H1 (cell line): ENCODE measurements at regions of chr12 and their contacts with region 1.

Region 1: GRCh38 chr12:71780237-71780822 is 25.7 kb downstream of the RAB21 start:
- DNase-seq: no peak
- H3K4me3 ChIP-seq: no peak overlapping the region
- H3K27ac ChIP-seq: no peak overlapping the region
- H3K4me1 ChIP-seq: no peaks in the 10 kb centered on the region
- H3K27me3 ChIP-seq: no peaks in the 10 kb centered on the region
- CTCF ChIP-seq: peak in 2 of 3 experiments; percentile 58 to 65; a peak in 3 of 4 replicates
- EP300 ChIP-seq: no peak
- POLR2A ChIP-seq: no peak
- RAD21 ChIP-seq: peak; percentile 61 to 70

Region 2: DNA sequence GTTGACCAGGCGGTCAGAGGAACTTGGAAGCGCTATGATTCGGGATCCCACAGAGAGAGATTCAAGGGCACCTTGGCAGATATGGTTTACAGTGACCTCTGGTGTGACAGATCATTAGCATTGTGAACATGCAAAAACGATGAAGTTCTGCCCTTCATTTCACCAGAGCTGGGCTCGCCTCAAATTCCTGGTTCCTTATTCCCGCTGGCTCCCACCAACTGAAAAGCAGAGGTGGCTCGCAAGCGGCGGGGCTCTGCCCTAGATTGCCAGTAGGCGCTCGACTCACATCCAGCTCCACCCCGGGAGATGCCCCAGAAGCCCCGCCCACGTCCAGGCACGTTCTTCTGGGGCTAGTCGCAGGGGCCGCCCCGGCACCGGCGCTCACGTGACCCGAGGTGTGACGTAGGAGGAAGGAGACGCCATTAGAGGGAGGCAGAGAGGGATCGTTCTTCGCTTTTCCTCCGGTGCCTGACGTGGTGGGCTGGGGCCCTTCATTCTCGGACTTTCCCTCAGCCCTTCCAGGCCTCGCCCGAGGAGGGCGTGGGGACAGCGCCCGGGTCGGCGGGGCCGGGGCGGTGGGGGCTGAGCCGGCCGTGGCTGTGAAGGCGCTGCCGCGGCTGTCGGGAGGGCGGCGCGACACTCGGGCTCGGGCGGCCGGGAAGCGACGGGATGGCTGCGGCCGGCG is 25.7 kb before region 1 on chr12 and contains the start of gene RAB21:
- CTCF ChIA-PET with region 1: interaction called, 15 read pairs
- POLR2A ChIA-PET with region 1: interaction called, 4 read pairs
- DNase-seq: peak; percentile 93 to 98
- H3K4me3 ChIP-seq: peak within 1 kb of the TSS; percentile 85 to 99 (median 92)
- H3K27ac ChIP-seq: peak within 1 kb of the TSS; percentile 94
- H3K4me1 ChIP-seq: peaks cover 0 to 12% (median 2%) of the 10 kb centered on the region in 4 experiments; a peak in 4 of 7 replicates
- H3K27me3 ChIP-seq: no peaks in the 10 kb centered on the region
- CTCF ChIP-seq: no peak
- EP300 ChIP-seq: peak in 1 of 2 experiments; percentile 46; a peak in 1 of 3 replicates
- POLR2A ChIP-seq: peak; percentile 91 to 96
- RAD21 ChIP-seq: no peak
- total RNA-seq, gene RAB21: 44.1 and 47.2 TPM in 2 replicates

Region 3: DNA sequence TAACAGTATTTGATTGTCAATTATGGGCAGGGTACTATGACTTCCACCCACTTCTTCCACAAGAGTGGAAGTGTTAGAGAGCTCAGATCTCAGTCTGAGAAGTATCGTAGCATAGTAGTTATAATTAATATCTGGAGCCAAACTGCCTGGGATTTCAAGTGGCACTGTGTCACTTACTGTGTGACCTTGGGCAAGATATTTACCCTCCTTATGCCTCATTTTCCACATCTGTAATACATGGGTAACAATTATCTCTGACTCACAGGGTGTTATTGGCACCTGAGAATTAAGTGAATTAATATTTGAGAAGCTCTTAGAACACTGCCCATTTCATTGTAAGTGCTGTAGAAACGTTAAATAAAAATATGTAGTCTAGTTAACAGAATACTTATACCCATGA is 14.1 kb before region 1 on chr12:
- CTCF ChIA-PET with region 1: interaction called, 10 read pairs
- POLR2A ChIA-PET with region 1: interaction called, 3 read pairs
- DNase-seq: no peak
- H3K4me3 ChIP-seq: no peak overlapping the region
- H3K27ac ChIP-seq: no peak overlapping the region
- H3K4me1 ChIP-seq: no peaks in the 10 kb centered on the region
- H3K27me3 ChIP-seq: no peaks in the 10 kb centered on the region
- CTCF ChIP-seq: no peak
- EP300 ChIP-seq: no peak
- POLR2A ChIP-seq: no peak
- RAD21 ChIP-seq: no peak

Region 4: DNA sequence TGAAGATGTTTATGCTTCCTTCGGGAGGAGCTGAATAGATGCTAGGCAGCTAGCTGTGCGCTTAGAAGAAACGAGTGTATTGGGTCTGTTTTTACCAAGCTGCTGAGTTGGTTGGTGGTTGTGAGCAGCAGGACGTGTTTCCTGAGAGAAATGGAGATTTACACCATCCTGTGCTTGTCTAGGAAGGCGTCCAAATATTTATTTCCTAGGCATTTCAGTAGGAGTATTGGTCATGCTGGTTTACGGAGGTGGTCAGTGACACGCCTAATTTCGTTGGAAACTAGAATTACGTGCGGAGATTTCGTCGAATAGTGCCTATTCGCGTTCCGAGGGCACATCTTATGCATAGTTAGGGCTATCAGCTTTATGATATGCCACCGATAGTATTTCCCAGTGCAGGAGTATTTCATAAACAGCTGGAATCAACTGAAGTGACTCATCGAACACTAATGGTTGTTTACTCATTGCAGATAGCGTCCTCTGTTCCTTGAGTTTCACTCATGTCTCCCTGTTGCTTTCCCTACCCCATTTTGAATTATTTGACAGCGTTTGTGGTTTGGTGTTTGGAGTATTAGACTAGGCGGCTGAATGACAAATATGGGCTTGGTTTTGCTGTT is 60.0 kb after region 1 on chr12:
- CTCF ChIA-PET with region 1: interaction called, 14 read pairs
- POLR2A ChIA-PET with region 1: no interaction called
- DNase-seq: no peak
- H3K4me3 ChIP-seq: peak overlapping the region; percentile 85 to 91 (median 88)
- H3K27ac ChIP-seq: peak overlapping the region; percentile 93
- H3K4me1 ChIP-seq: peaks cover 0 to 4% (median 1%) of the 10 kb centered on the region in 4 experiments; a peak in 2 of 7 replicates
- H3K27me3 ChIP-seq: peaks cover 0 to 4% (median under 1%) of the 10 kb centered on the region in 4 experiments; a peak in 1 of 7 replicates
- CTCF ChIP-seq: no peak
- EP300 ChIP-seq: no peak
- POLR2A ChIP-seq: no peak
- RAD21 ChIP-seq: no peak

Region 5: GRCh38 chr12:71942259-71942658 is 161.9 kb after region 1 on chr12:
- CTCF ChIA-PET with region 1: interaction called, 16 read pairs
- POLR2A ChIA-PET with region 1: no interaction called
- DNase-seq: no peak
- H3K4me3 ChIP-seq: no peak overlapping the region
- H3K27ac ChIP-seq: no peak overlapping the region
- H3K4me1 ChIP-seq: peaks cover 2 to 20% (median 16%) of the 10 kb centered on the region in 4 experiments; a peak in 6 of 7 replicates
- H3K27me3 ChIP-seq: no peaks in the 10 kb centered on the region
- CTCF ChIP-seq: no peak
- EP300 ChIP-seq: no peak
- POLR2A ChIP-seq: no peak
- RAD21 ChIP-seq: no peak